ENCODE measurements at regions of chr21 and their contacts with region 1.

Region 1: DNA sequence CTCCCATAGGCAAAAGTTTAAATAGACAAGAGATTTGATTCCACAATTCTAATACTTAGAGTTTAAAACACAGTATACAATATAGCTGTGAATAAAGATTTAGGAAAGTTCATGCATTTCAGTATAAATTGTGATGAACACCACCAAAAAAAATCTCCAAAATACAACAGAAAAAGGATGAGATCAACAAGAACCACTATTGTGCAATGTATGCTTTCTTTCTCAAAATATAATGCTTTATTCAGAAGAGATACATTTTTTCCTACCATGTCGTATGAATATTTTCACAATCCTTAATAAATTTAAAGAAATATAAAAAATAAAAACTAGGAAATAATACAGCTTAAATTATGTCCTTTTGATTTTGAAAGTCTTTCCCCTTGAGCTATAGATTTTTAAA is 1309.2 kb downstream of the MRPL39 start:
- DNase-seq: no peak
- ATAC-seq: no peak
- H3K4me3 ChIP-seq: no peak overlapping the region
- H3K27ac ChIP-seq: no peak overlapping the region
- H3K4me1 ChIP-seq: no peaks in the 10 kb centered on the region
- H3K27me3 ChIP-seq: no peaks in the 10 kb centered on the region
- CTCF ChIP-seq: no peak
- POLR2A ChIP-seq: no peak

Region 2: GRCh38 chr21:23955135-23955843 is 342.8 kb before region 1 on chr21:
- intact Hi-C with region 1: loop called in 1 of 10 experiments (anchors 5 kb)
- DNase-seq: no peak
- ATAC-seq: no peak
- H3K4me3 ChIP-seq: no peak overlapping the region
- H3K27ac ChIP-seq: no peak overlapping the region
- H3K4me1 ChIP-seq: no peaks in the 10 kb centered on the region
- H3K27me3 ChIP-seq: no peaks in the 10 kb centered on the region
- CTCF ChIP-seq: no peak
- POLR2A ChIP-seq: no peak

Region 3: GRCh38 chr21:24171736-24172135 is 126.3 kb before region 1 on chr21:
- intact Hi-C with region 1: no loop called
- DNase-seq: no peak
- ATAC-seq: no peak
- H3K4me3 ChIP-seq: no peak overlapping the region
- H3K27ac ChIP-seq: no peak overlapping the region
- H3K4me1 ChIP-seq: no peaks in the 10 kb centered on the region
- H3K27me3 ChIP-seq: no peaks in the 10 kb centered on the region
- CTCF ChIP-seq: no peak
- POLR2A ChIP-seq: no peak

Measured in heart left ventricle (tissue), 16 donors.